ENCODE measurements at regions of chr5 and their contacts with region 1.

Region 1: GRCh38 chr5:134813407-134813806 is 32.4 kb upstream of the C5orf24 start:
- DNase-seq: peak; percentile 53
- ATAC-seq: peak; percentile 93
- H3K4me3 Mint-ChIP-seq: no peak overlapping the region
- H3K27ac Mint-ChIP-seq: peak overlapping the region; percentile 58
- H3K4me1 Mint-ChIP-seq: peaks cover 10% of the 10 kb centered on the region
- H3K27me3 Mint-ChIP-seq: no peaks in the 10 kb centered on the region

Region 2: GRCh38 chr5:134794082-134794481 is 19.3 kb before region 1 on chr5:
- CTCF ChIA-PET with region 1: interaction called, 3 read pairs
- POLR2A ChIA-PET with region 1: no interaction called
- intact Hi-C with region 1: loop called in 1 of 2 experiments (anchors 1 kb)
- DNase-seq: no peak
- ATAC-seq: no peak
- H3K4me3 Mint-ChIP-seq: no peak overlapping the region
- H3K27ac Mint-ChIP-seq: no peak overlapping the region
- H3K4me1 Mint-ChIP-seq: peaks cover 8% of the 10 kb centered on the region
- H3K27me3 Mint-ChIP-seq: no peaks in the 10 kb centered on the region